Brain microvascular endothelial cell (primary cell): ENCODE measurements at regions of chr3 and their contacts with region 1.

Region 1: GRCh38 chr3:8987645-8988383 is 24.5 kb upstream of the RAD18 start:
- DNase-seq: peak; percentile 60
- H3K4me3 ChIP-seq: no peak overlapping the region
- H3K27ac ChIP-seq: no peak overlapping the region
- H3K27me3 ChIP-seq: no peaks in the 10 kb centered on the region
- CTCF ChIP-seq: peak; percentile 93

Region 2: DNA sequence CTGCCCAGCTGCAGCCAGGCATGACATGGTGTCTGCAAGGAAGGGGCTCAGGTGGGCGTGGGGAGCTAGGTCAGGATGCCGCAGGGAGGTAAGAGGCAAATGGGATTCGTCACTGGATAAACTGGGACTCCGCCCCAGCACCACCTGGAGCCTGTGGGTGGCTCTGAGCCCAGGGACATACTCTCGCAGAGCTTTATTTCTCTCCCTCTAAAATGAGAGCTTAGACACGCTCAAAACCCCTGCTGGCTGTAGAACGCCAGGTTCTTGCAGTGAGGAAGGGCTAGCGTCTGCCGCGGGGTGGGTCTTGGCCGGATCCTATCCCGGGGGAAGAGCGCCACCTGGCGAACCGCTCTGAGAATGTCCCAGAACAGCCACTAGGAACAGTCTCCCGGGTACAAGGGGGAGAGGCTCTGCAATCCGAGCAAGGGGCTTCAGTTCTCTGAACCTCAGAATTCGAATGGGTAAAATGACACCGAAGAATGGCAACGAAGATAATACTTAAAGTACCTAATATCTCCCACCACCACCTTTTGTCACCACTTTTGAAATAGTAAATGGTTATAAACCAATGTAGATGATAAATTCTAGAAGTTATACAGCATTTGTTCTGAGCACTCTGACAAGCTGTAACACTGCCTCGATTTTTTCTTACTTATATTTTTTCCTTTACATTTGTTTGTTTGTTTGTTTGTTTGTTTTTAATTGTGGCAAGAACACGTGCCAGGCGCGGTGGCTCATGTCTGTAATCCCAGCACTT is 314.8 kb after region 1 on chr3:
- in situ Hi-C with region 1: loop called (anchors 25 kb)
- DNase-seq: peak; percentile 67
- H3K4me3 ChIP-seq: peak overlapping the region; percentile 5
- H3K27ac ChIP-seq: no peak overlapping the region
- H3K27me3 ChIP-seq: peaks cover 4% of the 10 kb centered on the region
- CTCF ChIP-seq: peak; percentile 94